Mammary epithelial cell (primary cell): ENCODE measurements at regions of chr22 and their contacts with region 1.

Region 1: GRCh38 chr22:26172389-26172990 is 3.2 kb downstream of the SEZ6L start:
- DNase-seq: peak; percentile 24
- H3K4me3 ChIP-seq: no peak overlapping the region
- H3K27ac ChIP-seq: no peak overlapping the region
- H3K4me1 ChIP-seq: no peaks in the 10 kb centered on the region
- H3K27me3 ChIP-seq: peaks cover 21% of the 10 kb centered on the region
- CTCF ChIP-seq: peak; percentile 51 to 70

Region 2: GRCh38 chr22:26124991-26125725 is 47.3 kb before region 1 on chr22:
- CTCF ChIA-PET with region 1: no interaction called
- dilution Hi-C with region 1: loop called (anchors 5 kb)
- in situ Hi-C with region 1: no loop called
- intact Hi-C with region 1: no loop called
- DNase-seq: no peak
- H3K4me3 ChIP-seq: no peak overlapping the region
- H3K27ac ChIP-seq: no peak overlapping the region
- H3K4me1 ChIP-seq: no peaks in the 10 kb centered on the region
- H3K27me3 ChIP-seq: no peaks in the 10 kb centered on the region
- CTCF ChIP-seq: no peak

Region 3: DNA sequence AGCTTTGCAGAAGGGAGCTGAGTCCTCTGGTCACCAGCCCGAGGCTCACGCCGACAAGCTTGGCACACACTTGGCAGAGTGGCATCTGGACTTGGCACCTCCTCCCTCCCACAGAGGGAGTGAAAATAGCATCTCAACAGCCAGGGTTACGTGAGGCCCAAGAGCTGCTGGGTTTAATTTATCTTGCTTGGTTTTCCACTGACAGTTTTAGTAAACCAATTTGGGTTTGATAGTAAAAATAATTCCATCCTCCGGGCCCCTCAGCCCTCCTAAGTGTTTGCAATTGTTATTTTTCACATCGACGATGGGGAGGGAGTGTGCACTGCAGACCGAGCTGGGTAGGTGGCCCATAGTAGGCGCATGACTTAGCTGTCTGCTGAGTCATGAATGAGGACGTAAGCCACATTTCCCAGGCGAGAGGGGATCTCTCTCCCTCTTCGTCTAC is 149.0 kb after region 1 on chr22:
- CTCF ChIA-PET with region 1: no interaction called
- dilution Hi-C with region 1: no loop called
- in situ Hi-C with region 1: no loop called
- intact Hi-C with region 1: loop called (anchors 1 kb)
- DNase-seq: no peak
- H3K4me3 ChIP-seq: no peak overlapping the region
- H3K27ac ChIP-seq: no peak overlapping the region
- H3K4me1 ChIP-seq: peaks cover 17% of the 10 kb centered on the region
- H3K27me3 ChIP-seq: no peaks in the 10 kb centered on the region
- CTCF ChIP-seq: no peak